Heart left ventricle (tissue), 16 donors: ENCODE measurements at regions of chr5 and their contacts with region 1.

Region 1: DNA sequence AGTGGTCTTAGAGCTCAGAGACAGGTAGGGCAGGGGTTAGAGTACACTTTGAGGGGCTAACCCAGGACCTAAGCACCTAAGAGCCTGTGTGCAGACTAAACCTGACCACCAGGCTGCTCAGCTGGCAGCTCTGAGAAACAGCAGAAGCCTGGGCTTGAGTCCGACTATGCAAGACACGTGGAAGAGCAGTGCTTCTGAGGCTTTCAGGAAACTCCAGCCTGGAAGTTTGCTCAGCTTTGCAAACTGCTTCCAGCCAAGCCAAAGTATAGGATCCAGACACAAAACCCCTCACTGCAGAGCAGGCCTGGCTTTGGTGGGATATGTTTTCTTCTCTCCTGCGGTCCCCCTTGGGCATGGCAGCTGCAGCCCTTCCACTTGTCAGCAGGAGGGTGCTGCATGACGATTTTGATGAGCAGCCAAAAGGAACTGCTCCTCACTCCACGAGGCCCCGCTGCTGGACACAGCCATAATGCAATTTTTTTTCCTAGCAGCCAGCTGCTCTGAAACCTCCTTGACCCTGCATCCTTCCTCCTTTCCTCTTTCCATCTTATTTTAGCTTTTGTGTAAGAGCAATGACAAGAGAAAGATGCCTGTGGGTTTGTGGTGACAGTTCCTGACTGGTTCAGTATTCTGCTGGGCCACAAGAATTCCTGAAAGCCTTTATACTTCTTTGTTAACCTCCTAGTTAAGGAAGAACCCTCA is 123.1 kb downstream of the LIFR start:
- DNase-seq: peak; percentile 63 to 80 (median 75)
- ATAC-seq: peak; percentile 77 to 88 (median 84)
- H3K4me3 ChIP-seq: no peak overlapping the region
- H3K27ac ChIP-seq: peak overlapping the region in 8 of 12 donors; percentile 0 to 64 (median 24)
- H3K4me1 ChIP-seq: peaks cover 3 to 35% (median 14%) of the 10 kb centered on the region in 12 donors
- H3K27me3 ChIP-seq: peaks cover 0 to 51% (median 0%) of the 10 kb centered on the region in 9 donors
- CTCF ChIP-seq: peak in 1 of 12 donors; percentile 7
- POLR2A ChIP-seq: no peak

Region 2: DNA sequence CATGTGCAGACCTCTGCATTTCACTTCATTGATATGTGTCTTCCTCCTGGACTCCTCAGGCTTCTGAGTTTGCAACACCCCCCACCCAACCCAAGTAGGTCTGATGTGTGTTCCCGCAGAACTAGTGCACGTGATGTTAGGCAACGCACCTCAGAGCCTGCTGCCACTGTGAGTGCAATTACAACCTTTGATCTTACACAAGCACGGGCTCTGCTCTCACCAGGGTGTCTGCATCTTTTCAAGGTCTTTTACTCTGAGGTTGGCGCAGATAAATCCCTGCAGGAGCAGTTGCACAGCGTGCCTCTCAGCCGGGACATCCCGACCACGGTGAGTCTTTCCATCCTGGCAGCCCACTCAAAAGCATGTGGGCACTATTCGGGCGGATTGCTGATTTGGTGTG is 94.9 kb before region 1 on chr5:
- intact Hi-C with region 1: no loop called
- DNase-seq: no peak
- ATAC-seq: no peak
- H3K4me3 ChIP-seq: no peak overlapping the region
- H3K27ac ChIP-seq: no peak overlapping the region
- H3K4me1 ChIP-seq: no peaks in the 10 kb centered on the region
- H3K27me3 ChIP-seq: peaks cover 0 to 28% (median under 1%) of the 10 kb centered on the region in 9 donors
- CTCF ChIP-seq: no peak
- POLR2A ChIP-seq: no peak

Region 3: GRCh38 chr5:38382898-38383297 is 50.4 kb before region 1 on chr5:
- intact Hi-C with region 1: loop called in 1 of 10 experiments (anchors 2 kb)
- DNase-seq: peak in 4 of 5 donors; percentile 40 to 56 (median 44)
- ATAC-seq: peak; percentile 67 to 95 (median 88)
- H3K4me3 ChIP-seq: no peak overlapping the region
- H3K27ac ChIP-seq: no peak overlapping the region
- H3K4me1 ChIP-seq: peaks cover 0 to 5% (median 0%) of the 10 kb centered on the region in 12 donors
- H3K27me3 ChIP-seq: peaks cover 0 to 9% (median 0%) of the 10 kb centered on the region in 9 donors
- CTCF ChIP-seq: peak; percentile 63 to 89 (median 73)
- POLR2A ChIP-seq: no peak